Dorsolateral prefrontal cortex (tissue), 120 donors: ENCODE measurements at regions of chr7 and their contacts with region 1.

Region 1: GRCh38 chr7:142338633-142339501 is 81.0 kb upstream of the PRSS58 start:
- DNase-seq: peak in 5 of 10 donors; percentile 57 to 77 (median 66)
- H3K4me3 ChIP-seq: no peak overlapping the region
- H3K27ac ChIP-seq: no peak overlapping the region
- H3K27me3 ChIP-seq: peaks cover 0 to 4% (median 0%) of the 10 kb centered on the region in 45 donors
- CTCF ChIP-seq: peak in 45 of 56 donors; percentile 10 to 72 (median 43)

Region 2: GRCh38 chr7:142308918-142309317 is 29.9 kb before region 1 on chr7:
- intact Hi-C with region 1: loop called in 1 of 2 experiments (anchors 1 kb)
- DNase-seq: no peak
- H3K4me3 ChIP-seq: peak overlapping the region in 1 of 59 donors; percentile 29
- H3K27ac ChIP-seq: peak overlapping the region in 17 of 59 donors; percentile 12 to 72 (median 45)
- H3K27me3 ChIP-seq: peaks cover 0 to 11% (median 0%) of the 10 kb centered on the region in 45 donors
- CTCF ChIP-seq: no peak

Region 3: DNA sequence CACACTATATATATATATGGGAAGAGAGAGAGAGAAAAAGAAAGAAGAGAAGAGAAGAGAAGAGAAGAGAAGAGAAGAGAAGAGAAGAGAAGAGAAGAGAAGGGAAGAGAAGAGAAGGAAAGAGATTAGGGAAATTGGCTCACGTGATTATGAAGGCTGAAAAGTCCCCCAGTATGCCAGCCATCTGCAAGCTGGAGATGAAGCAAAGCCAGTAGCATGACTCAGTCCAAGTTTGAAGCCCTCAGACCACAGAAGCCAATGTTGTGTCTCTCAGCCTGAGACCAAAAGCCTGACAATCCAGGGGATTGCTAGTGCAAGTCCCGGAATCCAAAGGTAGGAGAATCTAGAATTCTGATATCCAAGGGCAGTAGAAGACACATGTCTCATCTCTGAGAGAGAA is 204.1 kb after region 1 on chr7:
- intact Hi-C with region 1: no loop called
- DNase-seq: no peak
- H3K4me3 ChIP-seq: no peak overlapping the region
- H3K27ac ChIP-seq: no peak overlapping the region
- H3K27me3 ChIP-seq: peaks cover 0 to 3% (median 0%) of the 10 kb centered on the region in 45 donors
- CTCF ChIP-seq: no peak